Naive thymus-derived CD4-positive, alpha-beta T cell (primary cell): ENCODE measurements at regions of chr16 and their contacts with region 1.

Region 1: GRCh38 chr16:11297492-11298142 is 16.5 kb upstream of the PRM1 start:
- DNase-seq: peak; percentile 50 to 70 (median 65)
- ATAC-seq: peak; percentile 95
- H3K4me3 ChIP-seq: peak overlapping the region; percentile 49
- H3K4me3 Mint-ChIP-seq: peak overlapping the region; percentile 76 to 87 (median 80)
- H3K27ac ChIP-seq: no peak overlapping the region
- H3K27ac Mint-ChIP-seq: peak overlapping the region; percentile 63 to 87 (median 77)
- H3K4me1 ChIP-seq: peaks cover 8% of the 10 kb centered on the region in 2 donors
- H3K4me1 Mint-ChIP-seq: peaks cover 9 to 53% (median 25%) of the 10 kb centered on the region in 7 donors
- H3K27me3 ChIP-seq: no peaks in the 10 kb centered on the region
- H3K27me3 Mint-ChIP-seq: peaks cover 0 to 19% (median 0%) of the 10 kb centered on the region in 5 donors

Region 2: GRCh38 chr16:10971560-10971961 is 326.1 kb before region 1 on chr16:
- CTCF ChIA-PET with region 1: interaction called, 12 read pairs
- POLR2A ChIA-PET with region 1: no interaction called
- intact Hi-C with region 1: loop called in 1 of 2 experiments (anchors 1 kb)
- DNase-seq: peak in 6 of 9 donors; percentile 15 to 56 (median 46)
- ATAC-seq: peak; percentile 62
- H3K4me3 ChIP-seq: no peak overlapping the region
- H3K4me3 Mint-ChIP-seq: peak overlapping the region in 1 of 10 donors; percentile 60
- H3K27ac ChIP-seq: no peak overlapping the region
- H3K27ac Mint-ChIP-seq: peak overlapping the region in 3 of 9 donors; percentile 18 to 49 (median 42)
- H3K4me1 ChIP-seq: no peaks in the 10 kb centered on the region
- H3K4me1 Mint-ChIP-seq: peaks cover 6 to 70% (median 15%) of the 10 kb centered on the region in 7 donors
- H3K27me3 ChIP-seq: no peaks in the 10 kb centered on the region
- H3K27me3 Mint-ChIP-seq: no peaks in the 10 kb centered on the region

Region 3: DNA sequence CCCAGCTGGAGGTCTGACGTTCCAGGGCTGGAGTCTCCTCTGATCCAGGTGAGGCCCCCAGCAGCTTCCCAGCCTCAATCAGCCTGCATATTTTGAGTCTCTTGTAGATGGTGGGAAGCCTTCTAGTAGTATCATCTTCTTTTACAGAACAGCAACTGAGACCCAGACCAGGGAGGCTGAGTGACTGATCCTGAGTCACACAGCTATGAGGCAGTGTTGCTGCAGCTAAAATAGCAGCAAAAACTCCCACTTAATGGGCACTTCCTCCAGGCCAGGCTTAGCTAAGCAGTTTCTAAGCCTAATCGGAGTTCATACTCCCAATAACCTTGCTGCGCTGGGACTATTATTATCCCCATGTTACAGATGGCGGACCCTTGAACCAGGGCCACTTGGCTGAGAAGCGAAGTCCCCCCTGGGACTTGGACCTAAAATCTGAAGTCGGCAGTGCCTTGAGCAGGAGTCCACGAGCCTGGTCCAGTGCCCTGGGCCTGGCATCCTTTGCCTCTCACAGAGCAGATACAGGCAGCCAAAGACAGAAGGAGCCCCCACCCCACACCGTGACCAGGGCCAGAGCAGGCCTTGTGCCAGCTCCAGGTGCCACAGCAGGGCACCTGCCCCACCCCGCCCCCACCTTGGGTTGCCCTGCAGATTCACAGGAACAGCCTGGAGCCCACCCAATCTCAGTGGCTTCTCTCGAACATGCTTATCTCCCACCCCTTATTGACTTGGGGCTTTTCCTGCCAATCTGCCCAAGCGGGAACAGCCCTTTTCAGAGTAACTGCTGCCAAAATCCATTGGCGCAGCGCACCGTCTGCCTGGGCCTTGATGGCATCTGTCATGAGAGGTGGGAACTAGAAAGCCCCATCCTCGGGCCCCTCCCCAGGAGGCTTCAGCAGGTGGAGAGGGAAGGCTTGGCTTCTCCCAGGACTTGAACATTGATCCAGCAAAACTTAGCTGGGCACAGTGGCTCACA is 106.7 kb before region 1 on chr16:
- CTCF ChIA-PET with region 1: no interaction called
- POLR2A ChIA-PET with region 1: no interaction called
- intact Hi-C with region 1: no loop called
- DNase-seq: no peak
- ATAC-seq: no peak
- H3K4me3 ChIP-seq: no peak overlapping the region
- H3K4me3 Mint-ChIP-seq: no peak overlapping the region
- H3K27ac ChIP-seq: no peak overlapping the region
- H3K27ac Mint-ChIP-seq: peak overlapping the region in 3 of 9 donors; percentile 25 to 58 (median 55)
- H3K4me1 ChIP-seq: no peaks in the 10 kb centered on the region
- H3K4me1 Mint-ChIP-seq: peaks cover 8 to 64% (median 12%) of the 10 kb centered on the region in 7 donors
- H3K27me3 ChIP-seq: no peaks in the 10 kb centered on the region
- H3K27me3 Mint-ChIP-seq: no peaks in the 10 kb centered on the region

Region 4: DNA sequence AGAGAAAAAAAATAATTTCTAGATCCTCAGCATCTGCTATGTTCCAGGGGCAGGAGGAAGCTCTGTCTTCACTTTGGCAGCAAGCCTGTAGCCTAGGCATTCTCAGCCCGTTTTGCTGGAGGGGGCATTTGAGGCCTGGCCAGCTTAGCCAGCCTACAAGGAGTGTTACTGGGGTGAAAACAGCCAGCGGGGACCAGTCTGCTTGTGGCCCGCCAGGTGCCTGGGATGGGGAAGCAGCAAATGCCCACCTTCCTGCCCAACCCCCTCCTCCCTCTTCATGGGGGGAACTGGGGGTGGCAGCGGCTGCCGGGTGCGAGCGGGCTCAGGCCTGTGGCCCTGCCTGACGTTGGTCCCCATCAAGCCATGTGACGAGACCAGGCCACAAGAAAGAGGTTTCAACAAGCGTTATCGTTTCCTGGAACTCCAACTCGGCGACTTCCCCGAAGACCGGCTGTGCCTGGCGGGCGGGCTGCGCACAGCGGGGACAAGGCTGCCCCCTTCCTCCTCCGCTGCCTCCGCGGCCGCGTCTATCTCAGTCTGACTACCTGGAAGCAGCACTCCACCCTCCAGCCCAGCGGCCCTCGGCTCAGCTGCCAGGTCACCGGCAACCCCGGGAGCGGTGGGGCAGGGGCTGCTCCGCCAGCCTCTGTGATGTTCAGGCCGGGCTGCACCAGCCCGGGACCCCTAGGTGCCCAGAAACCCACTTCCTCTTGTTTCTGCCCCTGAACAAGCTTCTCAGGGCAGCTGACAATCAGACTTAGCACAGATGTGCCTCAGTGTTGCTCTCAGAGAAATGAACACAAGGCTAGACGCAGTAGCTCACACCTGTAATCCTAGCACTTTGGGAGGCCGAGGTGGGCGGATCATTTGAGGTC is 64.5 kb before region 1 on chr16:
- CTCF ChIA-PET with region 1: no interaction called
- POLR2A ChIA-PET with region 1: no interaction called
- intact Hi-C with region 1: loop called in 1 of 2 experiments (anchors 2 kb)
- DNase-seq: peak; percentile 64 to 90 (median 85)
- ATAC-seq: peak; percentile 89
- H3K4me3 ChIP-seq: peak overlapping the region; percentile 50
- H3K4me3 Mint-ChIP-seq: peak overlapping the region; percentile 60 to 84 (median 76)
- H3K27ac ChIP-seq: peak overlapping the region; percentile 89
- H3K27ac Mint-ChIP-seq: peak overlapping the region; percentile 82 to 98 (median 97)
- H3K4me1 ChIP-seq: peaks cover 34 to 42% of the 10 kb centered on the region in 2 donors
- H3K4me1 Mint-ChIP-seq: peaks cover 45 to 86% (median 64%) of the 10 kb centered on the region in 7 donors
- H3K27me3 ChIP-seq: no peaks in the 10 kb centered on the region
- H3K27me3 Mint-ChIP-seq: no peaks in the 10 kb centered on the region

Region 5: GRCh38 chr16:11328172-11329070 is 30.8 kb after region 1 on chr16:
- CTCF ChIA-PET with region 1: interaction called, 3 read pairs
- POLR2A ChIA-PET with region 1: no interaction called
- intact Hi-C with region 1: loop called in 1 of 2 experiments (anchors 1 kb)
- DNase-seq: peak in 7 of 9 donors; percentile 24 to 52 (median 30)
- ATAC-seq: peak; percentile 83
- H3K4me3 ChIP-seq: peak overlapping the region; percentile 32
- H3K4me3 Mint-ChIP-seq: peak overlapping the region; percentile 46 to 85 (median 70)
- H3K27ac ChIP-seq: no peak overlapping the region
- H3K27ac Mint-ChIP-seq: peak overlapping the region; percentile 21 to 88 (median 73)
- H3K4me1 ChIP-seq: peaks cover 8 to 17% of the 10 kb centered on the region in 2 donors
- H3K4me1 Mint-ChIP-seq: peaks cover 11 to 68% (median 26%) of the 10 kb centered on the region in 7 donors
- H3K27me3 ChIP-seq: no peaks in the 10 kb centered on the region
- H3K27me3 Mint-ChIP-seq: peaks cover 0 to 4% (median 0%) of the 10 kb centered on the region in 5 donors

Region 6: GRCh38 chr16:11396241-11397048 is 98.8 kb after region 1 on chr16:
- CTCF ChIA-PET with region 1: no interaction called
- POLR2A ChIA-PET with region 1: no interaction called
- intact Hi-C with region 1: no loop called
- DNase-seq: peak; percentile 32 to 77 (median 58)
- ATAC-seq: peak; percentile 80
- H3K4me3 ChIP-seq: no peak overlapping the region
- H3K4me3 Mint-ChIP-seq: no peak overlapping the region
- H3K27ac ChIP-seq: no peak overlapping the region
- H3K27ac Mint-ChIP-seq: no peak overlapping the region
- H3K4me1 ChIP-seq: peaks cover 0 to 3% of the 10 kb centered on the region in 2 donors
- H3K4me1 Mint-ChIP-seq: peaks cover 0 to 5% (median 2%) of the 10 kb centered on the region in 7 donors
- H3K27me3 ChIP-seq: no peaks in the 10 kb centered on the region
- H3K27me3 Mint-ChIP-seq: no peaks in the 10 kb centered on the region

Region 7: GRCh38 chr16:11546608-11547061 is 249.0 kb after region 1 on chr16:
- CTCF ChIA-PET with region 1: no interaction called
- POLR2A ChIA-PET with region 1: no interaction called
- intact Hi-C with region 1: no loop called
- DNase-seq: no peak
- ATAC-seq: no peak
- H3K4me3 ChIP-seq: no peak overlapping the region
- H3K4me3 Mint-ChIP-seq: no peak overlapping the region
- H3K27ac ChIP-seq: no peak overlapping the region
- H3K27ac Mint-ChIP-seq: peak overlapping the region; percentile 20 to 83 (median 64)
- H3K4me1 ChIP-seq: no peaks in the 10 kb centered on the region
- H3K4me1 Mint-ChIP-seq: peaks cover 5 to 37% (median 17%) of the 10 kb centered on the region in 7 donors
- H3K27me3 ChIP-seq: no peaks in the 10 kb centered on the region
- H3K27me3 Mint-ChIP-seq: no peaks in the 10 kb centered on the region